ENCODE measurements at regions of chr10 and their contacts with region 1.

Region 1: DNA sequence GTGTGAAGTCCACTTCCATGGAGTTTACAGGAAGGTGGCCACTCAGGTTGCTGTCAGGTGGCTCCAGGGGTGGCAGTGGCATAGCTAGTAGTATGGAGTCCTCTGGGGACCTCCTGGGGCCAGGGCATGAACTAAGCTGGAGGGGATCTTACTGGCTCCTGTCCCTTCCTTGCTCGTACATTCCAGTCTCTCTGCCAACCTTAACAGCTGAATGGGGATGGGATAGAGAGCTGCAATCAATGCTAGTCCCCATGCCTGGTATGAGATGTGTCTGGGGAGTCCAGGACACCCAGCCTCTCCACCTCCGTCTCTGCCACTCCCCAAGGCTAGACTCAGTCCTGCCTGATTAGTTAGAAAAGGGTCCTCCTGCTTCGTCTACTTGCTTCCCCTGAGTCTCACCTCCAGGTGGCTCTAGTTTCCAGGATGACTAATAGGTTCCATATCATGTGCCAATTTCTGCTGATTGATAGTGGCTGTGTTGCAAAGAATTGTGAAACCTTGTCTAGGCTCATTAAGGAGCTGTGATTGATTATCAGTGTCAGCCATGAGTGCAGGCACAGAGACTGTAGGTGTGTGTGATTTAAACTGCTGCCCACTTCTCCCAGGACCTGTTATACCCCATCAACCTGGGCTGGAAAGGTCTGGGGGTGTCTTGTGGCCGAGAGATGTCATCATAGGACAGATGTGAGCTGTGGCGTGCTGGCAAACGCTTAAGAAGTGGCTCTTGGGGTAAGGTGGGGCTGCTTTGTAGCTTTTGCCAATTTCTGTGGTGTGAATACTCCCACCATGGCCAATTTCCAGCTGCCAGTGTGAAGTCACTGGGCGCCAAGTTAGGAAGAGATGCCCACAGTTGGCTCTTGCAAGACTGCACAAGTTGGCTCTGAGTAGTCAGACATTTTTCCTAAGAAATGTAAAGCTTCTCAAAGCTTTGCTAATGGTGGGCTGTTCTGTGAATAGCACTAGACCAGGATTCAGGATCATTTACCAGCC is 59.8 kb downstream of the COL13A1 start:
- DNase-seq: no peak
- H3K4me3 ChIP-seq: no peak overlapping the region
- H3K27ac ChIP-seq: no peak overlapping the region
- H3K4me1 ChIP-seq: peaks cover 38% of the 10 kb centered on the region
- H3K27me3 ChIP-seq: no peaks in the 10 kb centered on the region
- CTCF ChIP-seq: peak in 1 of 3 experiments; percentile 30
- POLR2A ChIP-seq: no peak

Region 2: GRCh38 chr10:69567920-69568319 is 293.6 kb before region 1 on chr10:
- intact Hi-C with region 1: loop called (anchors 10 kb)
- DNase-seq: no peak
- H3K4me3 ChIP-seq: no peak overlapping the region
- H3K27ac ChIP-seq: no peak overlapping the region
- H3K4me1 ChIP-seq: peaks cover 11% of the 10 kb centered on the region
- H3K27me3 ChIP-seq: peaks cover 11% of the 10 kb centered on the region
- CTCF ChIP-seq: no peak
- POLR2A ChIP-seq: no peak

Measured in vagina (tissue), 2 donors.